GM10248 (cell line): ENCODE measurements at regions of chr7 and their contacts with region 1.

Region 1: DNA sequence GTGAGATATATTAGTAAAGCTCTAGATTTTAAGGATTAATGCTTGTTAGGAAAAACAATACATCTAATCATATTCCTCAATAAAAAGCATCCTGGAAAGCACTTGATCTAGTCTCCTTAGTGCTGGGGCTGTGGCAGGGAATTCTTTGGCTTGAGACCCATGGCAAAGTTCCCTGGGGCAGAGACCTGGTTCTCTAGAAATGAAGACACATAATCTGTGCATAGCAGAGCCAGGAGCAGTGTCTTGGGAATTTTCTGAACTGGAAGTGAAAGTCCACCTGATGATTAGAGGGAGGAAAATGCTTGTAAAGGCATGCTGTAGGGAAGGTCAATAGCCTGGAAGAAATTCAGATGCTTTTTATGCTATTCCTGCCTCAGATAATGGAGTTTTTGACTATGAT is 247.4 kb downstream of the CDK14 start:
- DNase-seq: no peak
- CTCF ChIP-seq: no peak

Region 2: GRCh38 chr7:90857603-90858002 is 14.1 kb after region 1 on chr7:
- CTCF ChIA-PET with region 1: interaction called, 15 read pairs
- POLR2A ChIA-PET with region 1: no interaction called
- DNase-seq: no peak
- CTCF ChIP-seq: no peak